HCT116 (cell line): ENCODE measurements at regions of chr10 and their contacts with region 1.

Region 1: DNA sequence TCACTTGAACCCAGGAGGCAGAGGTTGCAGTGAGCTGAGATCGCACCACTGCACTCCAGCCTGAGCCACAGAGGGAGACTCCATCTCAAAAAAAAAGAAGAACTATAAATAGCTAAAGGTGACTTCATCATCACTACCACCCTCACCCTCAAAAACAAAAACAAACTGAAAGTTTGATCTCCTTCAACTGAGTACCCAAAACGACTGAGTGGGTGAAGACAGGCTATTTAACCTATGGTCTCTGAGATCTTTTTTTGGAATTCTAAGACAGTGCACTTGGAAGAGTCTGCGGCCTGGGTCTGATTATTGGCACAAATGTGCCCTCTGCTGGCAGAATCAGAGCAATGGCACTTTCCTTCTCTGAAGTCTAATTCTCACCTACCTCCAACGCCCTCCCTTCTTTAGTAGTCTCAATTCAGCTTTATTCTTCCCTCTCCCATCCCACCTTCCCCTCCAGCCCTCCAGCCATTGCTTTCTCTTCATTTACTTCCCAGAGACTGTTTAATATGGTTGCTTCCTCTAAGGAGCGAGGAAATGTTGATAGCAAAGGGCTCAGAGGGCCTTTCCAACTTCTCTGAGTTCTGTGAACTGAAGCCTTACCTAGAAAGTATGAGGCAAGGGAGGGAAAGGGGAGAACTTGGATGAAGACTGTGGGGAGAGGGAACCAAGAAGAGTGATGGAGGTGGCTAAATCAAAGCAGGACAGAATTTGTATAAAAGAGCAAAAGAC is 2.9 kb upstream of the MYOZ1 start:
- DNase-seq: peak; percentile 58
- ATAC-seq: peak; percentile 93
- H3K4me3 ChIP-seq: no peak overlapping the region
- H3K27ac ChIP-seq: no peak overlapping the region
- H3K4me1 ChIP-seq: peaks cover 0 to 9% of the 10 kb centered on the region in 2 experiments; a peak in 3 of 4 replicates
- H3K27me3 ChIP-seq: no peaks in the 10 kb centered on the region
- CTCF ChIP-seq: peak; percentile 75 to 93 (median 87)
- POLR2A ChIP-seq: no peak
- RAD21 ChIP-seq: peak; percentile 99

Region 2: DNA sequence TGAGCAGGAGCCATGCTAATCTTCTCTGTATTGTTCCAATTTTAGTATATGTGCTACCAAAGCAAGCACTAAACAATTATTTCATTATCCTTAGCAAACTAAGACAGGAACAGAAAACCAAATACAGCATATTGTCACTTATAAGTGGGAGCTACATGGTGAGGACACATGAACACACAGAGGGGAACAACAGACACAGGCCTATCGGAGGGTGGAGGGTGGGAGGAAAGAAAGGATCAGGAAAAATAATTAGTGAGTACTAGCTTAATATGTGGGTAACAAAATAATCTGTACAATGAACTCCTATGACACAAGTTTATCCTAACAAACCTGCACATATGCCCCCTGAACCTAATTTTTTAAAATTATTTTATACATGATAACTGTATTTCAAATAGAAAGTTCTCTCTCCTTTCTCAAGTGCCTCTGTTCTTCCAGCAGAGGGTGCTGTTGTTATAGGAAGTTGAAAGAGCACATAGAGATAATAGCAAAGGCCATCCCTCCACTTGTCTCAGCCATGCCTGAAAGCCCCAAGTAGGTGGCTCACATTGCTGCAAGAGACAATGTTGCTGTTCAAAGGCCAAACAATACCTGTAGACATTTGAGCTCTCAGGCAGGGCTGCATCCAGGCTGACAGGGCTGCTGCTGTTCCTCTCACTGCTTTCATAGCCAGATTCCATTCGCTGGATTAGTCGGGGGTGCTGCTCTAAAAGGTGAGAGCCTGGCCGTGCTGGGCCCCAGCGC is 114.9 kb before region 1 on chr10:
- CTCF ChIA-PET with region 1: interaction called, 36 read pairs
- POLR2A ChIA-PET with region 1: no interaction called
- RAD21 ChIA-PET with region 1: interaction called, 3 to 9 read pairs
- intact Hi-C with region 1: loop called (anchors 1 kb)
- DNase-seq: peak; percentile 56
- ATAC-seq: peak; percentile 96
- H3K4me3 ChIP-seq: no peak overlapping the region
- H3K27ac ChIP-seq: no peak overlapping the region
- H3K4me1 ChIP-seq: no peaks in the 10 kb centered on the region
- H3K27me3 ChIP-seq: no peaks in the 10 kb centered on the region
- CTCF ChIP-seq: peak; percentile 72 to 94 (median 83)
- POLR2A ChIP-seq: no peak
- RAD21 ChIP-seq: peak; percentile 98